HCT116 (cell line): ENCODE measurements at regions of chr13 and their contacts with region 1.

Region 1: GRCh38 chr13:40770934-40771618 is at the start of gene MRPS31:
- DNase-seq: peak; percentile 88
- ATAC-seq: peak; percentile 100
- H3K4me3 ChIP-seq: peak within 1 kb of the TSS; percentile 86 to 94
- H3K27ac ChIP-seq: peak within 1 kb of the TSS; percentile 66
- H3K4me1 ChIP-seq: peaks cover 7 to 13% of the 10 kb centered on the region in 2 experiments; a peak in 2 of 4 replicates
- H3K27me3 ChIP-seq: no peaks in the 10 kb centered on the region
- CTCF ChIP-seq: 0 out of 6 replicates have a peak, but pooled peaks of 1 of the 3 experiments have one; percentile 6
- POLR2A ChIP-seq: peak; percentile 66
- RAD21 ChIP-seq: no peak
- total RNA-seq, gene MRPS31: 22.8 TPM

Region 2: DNA sequence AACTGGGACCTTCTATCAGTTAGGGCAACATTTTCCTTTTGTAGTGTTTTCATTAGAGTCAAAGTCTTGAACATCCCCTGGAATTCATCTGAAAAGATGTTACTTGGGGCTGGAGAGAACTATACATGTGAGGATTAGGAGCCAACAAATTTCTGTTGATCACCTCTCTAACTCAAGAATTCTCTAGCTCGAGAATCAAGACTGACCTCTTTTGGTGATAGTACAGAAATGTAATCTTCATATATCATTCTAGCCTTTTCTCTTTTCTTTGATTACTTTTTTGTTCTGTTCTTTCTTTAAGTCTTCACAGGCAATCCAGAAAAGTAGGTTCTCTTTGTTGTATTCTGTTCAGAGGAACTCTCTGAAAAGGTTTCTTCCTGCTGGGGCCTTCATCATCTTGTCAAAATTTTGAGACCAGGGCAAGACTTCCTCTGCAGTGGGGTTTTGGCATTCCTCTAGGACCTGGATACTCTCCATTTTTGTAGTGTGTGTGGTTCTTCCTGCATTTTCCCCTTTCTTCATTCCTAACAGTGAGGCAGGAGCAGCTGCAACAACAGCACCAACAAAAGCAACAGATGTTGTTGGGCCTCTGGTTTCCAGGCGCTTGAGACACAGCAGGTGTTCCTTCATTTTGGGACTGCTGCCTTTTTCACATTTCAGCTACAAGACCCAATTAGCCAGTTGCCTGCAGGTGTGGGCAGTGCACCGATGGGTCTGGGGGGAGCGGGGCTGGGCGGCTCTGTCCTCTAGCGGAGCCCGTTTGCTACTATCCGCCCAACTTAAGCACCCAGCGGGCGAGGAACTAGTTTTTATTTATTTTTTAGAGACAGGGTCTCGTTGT is 221.8 kb after region 1 on chr13:
- CTCF ChIA-PET with region 1: no interaction called
- POLR2A ChIA-PET with region 1: no interaction called
- RAD21 ChIA-PET with region 1: no interaction called
- intact Hi-C with region 1: loop called (anchors 10 kb)
- DNase-seq: no peak
- ATAC-seq: no peak
- H3K4me3 ChIP-seq: no peak overlapping the region; a peak in 1 of 4 replicates
- H3K27ac ChIP-seq: peak overlapping the region; percentile 77
- H3K4me1 ChIP-seq: peaks cover 35% of the 10 kb centered on the region in 2 experiments
- H3K27me3 ChIP-seq: no peaks in the 10 kb centered on the region
- CTCF ChIP-seq: peak in 1 of 3 experiments; percentile 12; a peak in 2 of 6 replicates
- POLR2A ChIP-seq: no peak
- RAD21 ChIP-seq: peak; percentile 45